ENCODE measurements at regions of chr17 and their contacts with region 1.

Region 1: DNA sequence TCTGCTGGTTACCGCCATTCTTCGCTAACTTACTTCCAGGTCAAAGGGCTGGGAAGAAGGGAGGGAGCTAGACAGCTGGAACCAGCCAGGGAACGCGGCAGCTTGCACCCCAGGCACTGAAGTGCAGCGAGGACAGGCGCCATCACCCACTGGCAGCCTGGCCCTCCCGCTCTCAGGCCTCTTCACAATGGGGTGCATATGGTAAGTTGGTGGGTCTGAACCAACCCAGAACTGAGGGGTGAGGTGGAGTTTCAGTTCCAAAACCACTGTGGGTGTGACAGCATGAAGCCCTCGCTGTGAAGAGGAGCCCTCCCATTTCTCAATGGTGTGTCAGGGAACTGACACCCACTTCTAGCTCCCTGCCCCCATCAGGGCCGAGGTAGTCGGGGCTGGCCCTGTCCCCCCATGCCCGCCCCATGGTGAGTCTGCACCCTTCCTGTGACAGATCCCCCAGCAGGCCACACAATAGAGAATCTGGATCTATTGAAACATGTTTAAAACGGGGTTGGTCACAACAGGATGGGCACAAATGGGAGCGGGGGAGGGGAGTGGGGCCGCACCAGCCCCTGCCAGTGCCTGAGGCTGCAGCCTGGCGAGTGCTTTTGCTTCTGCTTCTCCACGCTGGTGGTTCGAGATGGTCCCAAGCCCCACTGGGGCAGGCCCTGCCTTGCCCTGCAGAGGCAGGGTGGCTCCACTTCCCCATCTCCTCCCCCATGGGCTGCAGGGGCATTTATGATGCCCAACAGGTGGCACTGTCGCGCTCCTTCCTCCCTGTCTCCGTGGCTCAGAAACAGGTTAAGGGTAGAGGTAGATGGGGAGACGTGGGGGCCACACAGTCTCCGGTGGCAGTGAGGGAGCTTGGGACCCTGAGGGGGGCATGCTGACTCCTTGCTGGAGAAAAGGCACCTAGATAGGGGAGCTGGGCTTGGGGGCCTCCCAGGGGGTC is 2.3 kb downstream of the LIMD2 start:
- DNase-seq: peak; percentile 73 to 93 (median 87)
- ATAC-seq: peak; percentile 32
- H3K4me3 ChIP-seq: peak overlapping the region; percentile 81 to 95
- H3K4me3 Mint-ChIP-seq: peak overlapping the region; percentile 98
- H3K27ac ChIP-seq: peak overlapping the region; percentile 65 to 82
- H3K27ac Mint-ChIP-seq: peak overlapping the region; percentile 98
- H3K4me1 ChIP-seq: peaks cover 53% of the 10 kb centered on the region
- H3K4me1 Mint-ChIP-seq: peaks cover 65% of the 10 kb centered on the region
- H3K27me3 ChIP-seq: no peaks in the 10 kb centered on the region
- H3K27me3 Mint-ChIP-seq: no peaks in the 10 kb centered on the region
- CTCF ChIP-seq: peak; percentile 84

Region 2: GRCh38 chr17:63425482-63425881 is 272.1 kb before region 1 on chr17:
- CTCF ChIA-PET with region 1: interaction called, 5 read pairs
- POLR2A ChIA-PET with region 1: interaction called, 11 read pairs
- intact Hi-C with region 1: loop called in 1 of 2 experiments (anchors 5 kb)
- DNase-seq: peak; percentile 35 to 84 (median 73)
- ATAC-seq: peak; percentile 84
- H3K4me3 ChIP-seq: no peak overlapping the region
- H3K4me3 Mint-ChIP-seq: no peak overlapping the region
- H3K27ac ChIP-seq: no peak overlapping the region
- H3K27ac Mint-ChIP-seq: no peak overlapping the region
- H3K4me1 ChIP-seq: peaks cover 29% of the 10 kb centered on the region
- H3K4me1 Mint-ChIP-seq: peaks cover 43% of the 10 kb centered on the region
- H3K27me3 ChIP-seq: no peaks in the 10 kb centered on the region
- H3K27me3 Mint-ChIP-seq: no peaks in the 10 kb centered on the region
- CTCF ChIP-seq: peak; percentile 99

Region 3: DNA sequence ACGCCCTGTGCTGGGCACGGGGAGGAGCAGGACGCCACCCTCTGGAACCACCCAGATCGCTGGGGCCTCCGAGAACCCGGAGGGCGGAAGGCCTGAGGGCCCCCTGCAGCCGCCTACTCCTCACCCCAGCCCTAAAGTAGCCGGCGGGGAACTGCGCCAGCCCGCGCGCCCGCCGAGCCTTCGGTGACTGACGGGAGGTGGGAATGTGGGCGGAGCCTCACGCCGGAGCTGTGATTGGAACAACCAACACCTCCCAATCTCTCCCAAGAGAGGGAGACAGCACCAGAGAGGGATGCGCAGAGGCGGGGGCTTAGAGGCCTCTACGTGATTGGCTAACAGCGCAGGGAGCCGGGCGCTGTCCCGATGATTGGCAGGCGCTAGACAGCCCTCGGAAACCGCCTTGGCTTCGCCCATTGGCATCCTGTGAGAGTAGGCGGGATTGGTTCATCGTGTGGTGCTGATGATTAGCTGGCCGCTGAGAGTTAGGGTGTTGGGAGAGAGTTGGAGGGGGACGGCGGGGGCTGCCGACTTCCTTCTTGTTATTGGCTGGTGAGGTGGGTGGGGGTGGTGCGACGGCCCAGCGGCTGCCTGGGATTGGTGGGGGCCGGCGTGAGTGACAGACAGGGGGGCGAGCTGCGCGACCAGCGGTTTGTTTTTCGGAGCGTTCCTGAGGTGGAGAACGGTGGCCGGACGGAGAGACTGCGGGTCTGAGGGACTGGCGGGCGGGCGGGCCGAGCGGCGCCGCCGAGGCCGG is 75.7 kb before region 1 on chr17 and contains the start of gene MAP3K3:
- CTCF ChIA-PET with region 1: interaction called, 3 read pairs
- POLR2A ChIA-PET with region 1: interaction called, 75 read pairs
- intact Hi-C with region 1: loop called (anchors 1 to 2 kb)
- DNase-seq: peak; percentile 93 to 99 (median 96)
- ATAC-seq: peak; percentile 90
- H3K4me3 ChIP-seq: peak within 1 kb of the TSS; percentile 78 to 79
- H3K4me3 Mint-ChIP-seq: peak within 1 kb of the TSS; percentile 98
- H3K27ac ChIP-seq: peak within 1 kb of the TSS; percentile 58 to 81
- H3K27ac Mint-ChIP-seq: peak within 1 kb of the TSS; percentile 93
- H3K4me1 ChIP-seq: peaks cover 30% of the 10 kb centered on the region
- H3K4me1 Mint-ChIP-seq: peaks cover 39% of the 10 kb centered on the region
- H3K27me3 ChIP-seq: no peaks in the 10 kb centered on the region
- H3K27me3 Mint-ChIP-seq: no peaks in the 10 kb centered on the region
- CTCF ChIP-seq: no peak
- total RNA-seq, gene MAP3K3: 72.9 to 74.5 TPM

Region 4: DNA sequence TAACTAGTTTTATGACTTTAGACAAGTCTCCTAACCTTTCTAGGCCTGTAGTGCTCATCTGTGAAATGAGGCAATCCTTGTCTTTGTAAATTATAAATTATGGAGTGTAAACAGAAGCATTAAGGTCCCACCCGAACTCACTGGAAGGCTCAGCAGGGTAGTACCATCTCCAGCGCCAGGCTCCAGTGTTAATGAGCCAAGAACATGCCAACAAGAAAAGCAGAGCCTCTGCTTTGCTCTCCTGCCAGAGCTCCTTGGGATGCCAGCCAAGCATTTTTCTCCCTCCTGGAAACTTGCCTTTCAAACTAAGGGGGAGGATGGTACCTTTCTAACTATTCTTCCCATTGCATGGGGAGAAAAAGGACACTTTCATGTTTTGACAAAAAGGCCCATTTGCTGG is 12.6 kb before region 1 on chr17:
- CTCF ChIA-PET with region 1: interaction called, 8 read pairs
- POLR2A ChIA-PET with region 1: interaction called, 44 read pairs
- intact Hi-C with region 1: no loop called
- DNase-seq: no peak
- ATAC-seq: no peak
- H3K4me3 ChIP-seq: no peak overlapping the region
- H3K4me3 Mint-ChIP-seq: no peak overlapping the region
- H3K27ac ChIP-seq: no peak overlapping the region
- H3K27ac Mint-ChIP-seq: no peak overlapping the region
- H3K4me1 ChIP-seq: no peaks in the 10 kb centered on the region
- H3K4me1 Mint-ChIP-seq: no peaks in the 10 kb centered on the region
- H3K27me3 ChIP-seq: no peaks in the 10 kb centered on the region
- H3K27me3 Mint-ChIP-seq: no peaks in the 10 kb centered on the region
- CTCF ChIP-seq: no peak

Region 5: DNA sequence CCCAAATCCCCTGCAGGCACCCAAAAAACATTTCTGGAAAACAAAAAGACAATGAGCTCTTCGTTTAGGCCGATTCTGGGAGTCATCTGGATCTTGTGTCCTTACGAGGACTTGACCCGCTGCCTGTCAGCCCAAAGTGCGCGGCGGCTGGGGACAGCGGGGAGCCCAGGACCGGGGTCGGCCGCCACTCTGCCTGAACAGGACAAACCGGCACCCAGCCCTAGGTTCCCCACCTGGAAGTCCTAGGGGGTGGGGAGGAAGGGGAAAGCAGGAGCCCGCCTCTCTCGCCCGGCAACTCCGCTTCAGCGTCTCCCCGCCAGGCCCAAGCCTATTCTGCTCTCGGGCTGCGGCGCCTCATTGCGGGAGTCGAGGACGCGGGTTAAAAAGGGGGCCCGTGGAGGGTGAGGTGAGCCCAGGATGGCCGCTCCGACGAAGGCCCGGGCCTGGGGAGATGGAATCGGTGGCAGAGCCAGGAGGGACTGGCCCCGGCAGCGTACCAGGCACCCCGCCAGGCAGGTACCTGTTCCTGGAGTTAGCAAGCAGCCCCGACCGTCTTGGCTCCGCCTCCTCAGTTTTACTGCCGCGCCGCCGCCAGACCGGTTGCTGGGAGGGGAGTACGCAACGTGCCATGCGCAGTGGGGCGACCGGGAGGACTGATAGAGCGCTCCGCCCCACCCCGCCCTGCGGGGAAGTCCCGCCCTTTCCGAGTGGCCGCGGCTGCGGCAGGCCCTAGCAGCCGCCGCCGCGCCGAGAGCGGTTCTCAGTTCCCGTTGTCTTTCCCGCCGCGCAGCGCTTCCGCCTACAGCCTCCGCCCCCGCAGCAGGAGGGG is 43.8 kb after region 1 on chr17 and contains the start of gene STRADA:
- CTCF ChIA-PET with region 1: interaction called, 8 read pairs
- POLR2A ChIA-PET with region 1: interaction called, 30 read pairs
- intact Hi-C with region 1: loop called (anchors 1 kb)
- DNase-seq: peak; percentile 97 to 100 (median 99)
- ATAC-seq: peak; percentile 92
- H3K4me3 ChIP-seq: peak within 1 kb of the TSS; percentile 58 to 86
- H3K4me3 Mint-ChIP-seq: peak within 1 kb of the TSS; percentile 88
- H3K27ac ChIP-seq: peak within 1 kb of the TSS; percentile 81 to 91
- H3K27ac Mint-ChIP-seq: peak within 1 kb of the TSS; percentile 94
- H3K4me1 ChIP-seq: peaks cover 14% of the 10 kb centered on the region
- H3K4me1 Mint-ChIP-seq: peaks cover 27% of the 10 kb centered on the region
- H3K27me3 ChIP-seq: no peaks in the 10 kb centered on the region
- H3K27me3 Mint-ChIP-seq: no peaks in the 10 kb centered on the region
- CTCF ChIP-seq: no peak
- total RNA-seq, gene STRADA: 54.7 to 63.6 TPM

Region 6: GRCh38 chr17:63834431-63835166 is 137.0 kb after region 1 on chr17:
- CTCF ChIA-PET with region 1: interaction called, 3 read pairs
- POLR2A ChIA-PET with region 1: interaction called, 18 read pairs
- intact Hi-C with region 1: loop called in 1 of 2 experiments (anchors 2 kb)
- DNase-seq: peak in 7 of 9 experiments; percentile 29 to 82 (median 68)
- ATAC-seq: peak; percentile 82
- H3K4me3 ChIP-seq: no peak overlapping the region
- H3K4me3 Mint-ChIP-seq: no peak overlapping the region
- H3K27ac ChIP-seq: peak overlapping the region in 1 of 2 experiments; percentile 8
- H3K27ac Mint-ChIP-seq: peak overlapping the region; percentile 66
- H3K4me1 ChIP-seq: peaks cover 65% of the 10 kb centered on the region
- H3K4me1 Mint-ChIP-seq: peaks cover 50% of the 10 kb centered on the region
- H3K27me3 ChIP-seq: no peaks in the 10 kb centered on the region
- H3K27me3 Mint-ChIP-seq: no peaks in the 10 kb centered on the region
- CTCF ChIP-seq: peak; percentile 40

Region 7: DNA sequence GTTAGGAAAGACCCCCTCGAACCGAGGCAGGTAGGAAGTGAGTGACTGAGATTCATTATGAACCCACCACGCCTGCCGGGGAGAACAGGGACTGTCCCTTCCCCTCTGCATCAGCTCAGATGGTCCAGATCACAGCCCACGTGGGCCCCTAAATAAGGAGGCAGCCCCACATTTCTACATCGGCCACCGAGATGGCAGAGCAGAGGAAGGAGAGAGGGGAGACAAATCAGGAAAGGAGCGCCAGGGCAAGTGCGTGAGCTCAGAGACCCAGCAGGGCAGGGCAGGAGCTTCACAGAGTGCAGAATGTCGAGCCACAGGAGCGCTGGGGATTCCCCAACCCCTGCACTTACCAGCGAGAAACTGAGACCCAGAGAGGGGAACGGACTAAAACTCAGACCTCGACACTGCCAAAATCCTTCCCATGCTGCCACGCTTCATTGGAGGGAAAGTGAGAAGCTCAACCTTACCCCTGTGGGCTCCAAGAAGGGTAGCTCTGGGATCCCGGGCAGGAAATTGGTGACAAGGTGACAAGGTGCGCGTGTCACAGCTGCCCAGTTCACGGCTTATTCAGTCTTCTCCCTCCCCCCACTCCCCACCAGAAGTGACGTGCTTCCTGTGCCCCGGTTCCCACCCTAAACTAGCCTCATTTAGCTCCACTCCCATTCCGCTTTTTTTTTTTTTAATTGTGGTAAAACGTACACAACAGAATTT is 322.6 kb after region 1 on chr17 and contains the start of gene ICAM2:
- CTCF ChIA-PET with region 1: no interaction called
- POLR2A ChIA-PET with region 1: interaction called, 9 read pairs
- intact Hi-C with region 1: loop called (anchors 2 to 5 kb)
- DNase-seq: peak; percentile 83 to 99 (median 90)
- ATAC-seq: peak; percentile 73
- H3K4me3 ChIP-seq: peak within 1 kb of the TSS; percentile 78 to 87
- H3K4me3 Mint-ChIP-seq: peak within 1 kb of the TSS; percentile 99
- H3K27ac ChIP-seq: peak within 1 kb of the TSS; percentile 95 to 99
- H3K27ac Mint-ChIP-seq: peak within 1 kb of the TSS; percentile 100
- H3K4me1 ChIP-seq: peaks cover 72% of the 10 kb centered on the region
- H3K4me1 Mint-ChIP-seq: peaks cover 79% of the 10 kb centered on the region
- H3K27me3 ChIP-seq: no peaks in the 10 kb centered on the region
- H3K27me3 Mint-ChIP-seq: no peaks in the 10 kb centered on the region
- CTCF ChIP-seq: no peak
- total RNA-seq, gene ICAM2: 38.0 to 38.7 TPM

Measured in CD8-positive, alpha-beta T cell (primary cell).